B cell (primary cell): ENCODE measurements at regions of chr1 and their contacts with region 1.

Region 1: DNA sequence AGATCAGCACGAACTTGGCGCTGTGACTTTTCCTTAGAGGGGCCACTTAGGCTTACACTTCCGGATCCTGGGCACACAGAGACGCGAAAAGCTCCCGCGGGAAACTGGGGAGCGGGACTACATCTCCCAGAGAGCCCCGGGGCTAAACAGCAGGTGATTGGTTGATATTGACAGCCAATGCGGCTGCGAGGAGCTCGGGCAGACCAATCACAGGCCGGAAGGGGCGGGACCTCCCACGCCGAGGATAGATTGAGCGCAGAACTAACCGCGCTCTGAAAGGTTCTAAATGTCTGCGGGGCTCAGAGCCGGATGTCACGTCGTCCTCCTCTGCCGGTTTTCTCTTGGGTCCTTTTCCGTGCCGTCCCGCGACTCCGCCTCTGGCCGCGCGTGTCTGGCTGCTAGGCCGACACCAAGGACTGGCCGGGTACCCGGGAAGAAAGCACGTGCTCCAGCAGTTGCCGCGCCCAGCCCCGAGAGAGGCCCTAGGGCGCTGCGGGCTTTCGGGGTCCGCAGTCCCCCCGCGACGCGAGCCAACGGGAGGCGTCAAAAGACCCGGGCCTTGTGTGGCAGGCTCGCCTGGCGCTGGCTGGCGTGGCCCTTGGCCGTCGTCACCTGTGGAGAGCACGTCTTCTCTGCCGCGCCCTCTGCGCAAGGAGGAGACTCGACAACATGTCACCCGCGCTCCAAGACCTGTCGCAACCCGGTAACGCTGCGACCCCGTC is at the start of gene MTR:
- DNase-seq: peak; percentile 96
- ATAC-seq: peak; percentile 95
- H3K4me3 ChIP-seq: peak within 1 kb of the TSS; percentile 82 to 96 (median 93)
- H3K4me3 Mint-ChIP-seq: peak within 1 kb of the TSS; percentile 88
- H3K27ac ChIP-seq: peak within 1 kb of the TSS; percentile 88 to 95
- H3K27ac Mint-ChIP-seq: peak within 1 kb of the TSS; percentile 88
- H3K4me1 ChIP-seq: peaks cover 14% of the 10 kb centered on the region in 2 donors
- H3K4me1 Mint-ChIP-seq: peaks cover 35% of the 10 kb centered on the region
- H3K27me3 ChIP-seq: no peaks in the 10 kb centered on the region
- H3K27me3 Mint-ChIP-seq: peaks cover 21% of the 10 kb centered on the region
- CTCF ChIP-seq: no peak
- total RNA-seq, gene MTR: 49.1 and 50.4 TPM in 2 replicates

Region 2: GRCh38 chr1:235328357-235329138 is 1466.6 kb before region 1 on chr1 and contains the start of gene GGPS1:
- CTCF ChIA-PET with region 1: no interaction called
- POLR2A ChIA-PET with region 1: no interaction called
- intact Hi-C with region 1: loop called (anchors 10 kb)
- DNase-seq: peak; percentile 98
- ATAC-seq: peak; percentile 75
- H3K4me3 ChIP-seq: peak within 1 kb of the TSS; percentile 89 to 99 (median 99)
- H3K4me3 Mint-ChIP-seq: no peak within 1 kb of the TSS
- H3K27ac ChIP-seq: peak within 1 kb of the TSS; percentile 89 to 98
- H3K27ac Mint-ChIP-seq: no peak within 1 kb of the TSS
- H3K4me1 ChIP-seq: peaks cover 33 to 58% of the 10 kb centered on the region in 2 donors
- H3K4me1 Mint-ChIP-seq: peaks cover 53% of the 10 kb centered on the region
- H3K27me3 ChIP-seq: no peaks in the 10 kb centered on the region
- H3K27me3 Mint-ChIP-seq: no peaks in the 10 kb centered on the region
- CTCF ChIP-seq: peak; percentile 36
- total RNA-seq, gene GGPS1: 43.6 and 46.8 TPM in 2 replicates

Region 3: GRCh38 chr1:235367000-235367908 is 1427.9 kb before region 1 on chr1 and contains the start of gene TBCE:
- CTCF ChIA-PET with region 1: no interaction called
- POLR2A ChIA-PET with region 1: no interaction called
- intact Hi-C with region 1: loop called (anchors 10 kb)
- DNase-seq: peak; percentile 84
- ATAC-seq: peak; percentile 100
- H3K4me3 ChIP-seq: peak within 1 kb of the TSS; percentile 79 to 97 (median 86)
- H3K4me3 Mint-ChIP-seq: peak within 1 kb of the TSS; percentile 99
- H3K27ac ChIP-seq: peak within 1 kb of the TSS; percentile 59 to 77
- H3K27ac Mint-ChIP-seq: peak within 1 kb of the TSS; percentile 94
- H3K4me1 ChIP-seq: peaks cover 12% of the 10 kb centered on the region in 2 donors
- H3K4me1 Mint-ChIP-seq: peaks cover 25% of the 10 kb centered on the region
- H3K27me3 ChIP-seq: no peaks in the 10 kb centered on the region
- H3K27me3 Mint-ChIP-seq: no peaks in the 10 kb centered on the region
- CTCF ChIP-seq: no peak
- total RNA-seq, gene TBCE: 18.4 and 22.1 TPM in 2 replicates

Region 4: DNA sequence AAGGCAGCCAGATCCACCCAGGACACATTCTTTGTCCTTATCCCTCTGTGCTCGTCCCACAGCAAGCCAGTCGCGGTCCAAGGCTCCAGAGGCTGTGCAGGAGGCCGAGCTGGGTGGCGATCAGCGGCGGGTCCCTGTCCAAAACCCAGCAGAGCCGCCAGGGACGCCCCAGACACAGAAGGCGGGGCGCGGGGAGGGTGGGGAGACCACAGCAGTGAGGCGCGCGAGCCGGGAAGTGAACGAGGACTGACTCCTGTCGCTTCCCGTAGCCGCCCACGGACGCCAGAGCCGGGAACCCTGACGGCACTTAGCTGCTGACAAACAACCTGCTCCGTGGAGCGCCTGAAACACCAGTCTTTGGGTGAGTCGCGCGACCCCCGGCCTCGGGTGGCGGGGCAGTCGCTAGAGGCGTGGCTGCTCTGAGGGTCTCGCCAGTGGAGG is 271.5 kb before region 1 on chr1 and contains the start of gene LGALS8:
- CTCF ChIA-PET with region 1: no interaction called
- POLR2A ChIA-PET with region 1: no interaction called
- intact Hi-C with region 1: loop called (anchors 1 kb)
- DNase-seq: peak; percentile 87
- ATAC-seq: peak; percentile 64
- H3K4me3 ChIP-seq: peak within 1 kb of the TSS; percentile 70 to 99 (median 96)
- H3K4me3 Mint-ChIP-seq: peak within 1 kb of the TSS; percentile 99
- H3K27ac ChIP-seq: peak within 1 kb of the TSS; percentile 78
- H3K27ac Mint-ChIP-seq: peak within 1 kb of the TSS; percentile 97
- H3K4me1 ChIP-seq: peaks cover 8 to 9% of the 10 kb centered on the region in 2 donors
- H3K4me1 Mint-ChIP-seq: peaks cover 16% of the 10 kb centered on the region
- H3K27me3 ChIP-seq: no peaks in the 10 kb centered on the region
- H3K27me3 Mint-ChIP-seq: no peaks in the 10 kb centered on the region
- CTCF ChIP-seq: no peak
- total RNA-seq, gene LGALS8: 64.9 and 67.0 TPM in 2 replicates

Region 5: GRCh38 chr1:236603991-236604904 is 190.9 kb before region 1 on chr1 and contains the start of gene HEATR1:
- CTCF ChIA-PET with region 1: interaction called, 7 read pairs
- POLR2A ChIA-PET with region 1: interaction called, 4 read pairs
- intact Hi-C with region 1: loop called (anchors 1 kb)
- DNase-seq: peak; percentile 92
- ATAC-seq: peak; percentile 97
- H3K4me3 ChIP-seq: peak within 1 kb of the TSS; percentile 77 to 99 (median 80)
- H3K4me3 Mint-ChIP-seq: peak within 1 kb of the TSS; percentile 99
- H3K27ac ChIP-seq: peak within 1 kb of the TSS; percentile 26 to 47
- H3K27ac Mint-ChIP-seq: peak within 1 kb of the TSS; percentile 97
- H3K4me1 ChIP-seq: peaks cover 15 to 16% of the 10 kb centered on the region in 2 donors
- H3K4me1 Mint-ChIP-seq: peaks cover 32% of the 10 kb centered on the region
- H3K27me3 ChIP-seq: peaks cover 0 to 9% (median 4%) of the 10 kb centered on the region in 4 experiments
- H3K27me3 Mint-ChIP-seq: peaks cover 11% of the 10 kb centered on the region
- CTCF ChIP-seq: no peak
- total RNA-seq, gene HEATR1: 50.6 and 56.0 TPM in 2 replicates

Region 6: DNA sequence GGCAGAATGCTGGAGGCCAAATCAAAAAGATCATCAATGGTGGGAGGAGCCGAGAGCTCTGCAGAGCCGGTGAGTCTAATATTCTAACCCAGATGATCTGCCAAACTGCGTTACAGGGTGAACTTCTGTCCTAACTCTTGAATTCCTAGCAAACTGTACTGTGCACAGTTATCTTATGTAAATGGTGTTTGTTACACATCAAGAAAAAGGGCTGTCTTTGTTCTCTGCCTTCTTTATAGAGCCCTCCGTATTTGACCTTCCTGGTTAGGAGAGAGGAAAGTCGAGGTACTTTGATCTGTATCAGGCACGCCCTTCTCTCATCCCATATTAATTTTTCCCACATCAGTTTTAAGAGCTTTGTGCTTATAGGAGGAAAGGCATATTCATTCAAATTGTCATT is 171.4 kb after region 1 on chr1:
- CTCF ChIA-PET with region 1: no interaction called
- POLR2A ChIA-PET with region 1: no interaction called
- intact Hi-C with region 1: no loop called
- DNase-seq: no peak
- ATAC-seq: no peak
- H3K4me3 ChIP-seq: no peak overlapping the region
- H3K4me3 Mint-ChIP-seq: no peak overlapping the region
- H3K27ac ChIP-seq: no peak overlapping the region
- H3K27ac Mint-ChIP-seq: no peak overlapping the region
- H3K4me1 ChIP-seq: no peaks in the 10 kb centered on the region
- H3K4me1 Mint-ChIP-seq: no peaks in the 10 kb centered on the region
- H3K27me3 ChIP-seq: no peaks in the 10 kb centered on the region
- H3K27me3 Mint-ChIP-seq: peaks cover 8% of the 10 kb centered on the region
- CTCF ChIP-seq: no peak